MCF 10A (cell line): ENCODE measurements at regions of chr6 and their contacts with region 1.

Region 1: DNA sequence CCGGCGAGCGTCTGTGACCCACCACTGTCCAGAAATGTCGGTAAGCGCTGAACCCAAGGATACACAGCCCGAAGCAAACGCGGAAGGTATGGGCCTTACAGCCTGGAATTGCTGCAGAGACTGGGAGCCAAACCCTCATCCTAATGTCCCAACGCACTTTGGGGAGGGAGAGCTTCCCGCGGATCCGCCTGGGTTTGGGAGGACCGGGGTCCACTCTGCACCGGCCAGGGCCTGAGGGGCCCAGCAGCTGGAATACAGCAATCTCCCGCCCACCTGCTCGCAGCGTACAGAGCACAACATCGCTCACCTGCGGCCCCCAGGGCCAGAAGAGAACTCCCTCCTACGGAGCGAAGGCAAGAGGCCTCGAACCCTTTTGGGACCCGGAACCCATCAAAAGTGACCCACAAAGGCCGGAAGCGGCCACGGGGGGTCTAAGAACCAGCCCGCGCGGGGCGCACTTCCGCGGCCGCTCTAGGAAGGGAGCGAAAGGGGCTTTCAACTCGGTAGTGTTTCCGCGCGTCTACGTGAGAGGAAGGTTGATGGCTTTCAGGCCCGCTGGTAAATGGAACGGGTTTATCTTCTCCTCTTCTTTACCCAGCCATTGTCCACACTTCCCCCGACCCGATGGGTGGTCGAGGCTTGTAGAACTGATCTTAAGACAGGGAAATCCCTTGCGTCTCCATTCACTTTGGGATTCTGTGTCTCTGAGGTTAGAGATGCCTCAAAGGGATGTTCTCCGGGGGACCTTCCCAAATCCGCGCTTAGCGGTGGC is at the start of gene ZSCAN12:
- DNase-seq: peak; percentile 78
- H3K4me3 Mint-ChIP-seq: peak within 1 kb of the TSS; percentile 81
- H3K27ac Mint-ChIP-seq: peak within 1 kb of the TSS; percentile 85
- H3K4me1 Mint-ChIP-seq: peaks cover 36% of the 10 kb centered on the region
- H3K27me3 Mint-ChIP-seq: no peaks in the 10 kb centered on the region
- CTCF ChIP-seq: no peak
- total RNA-seq, gene ZSCAN12: 4.4 and 5.3 TPM in 2 replicates

Region 2: GRCh38 chr6:28443112-28443773 is 43.7 kb after region 1 on chr6 and contains the start of gene ZSCAN23:
- CTCF ChIA-PET with region 1: no interaction called
- POLR2A ChIA-PET with region 1: interaction called, 3 read pairs
- intact Hi-C with region 1: loop called (anchors 2 kb)
- DNase-seq: peak; percentile 85
- H3K4me3 Mint-ChIP-seq: peak within 1 kb of the TSS; percentile 99
- H3K27ac Mint-ChIP-seq: peak within 1 kb of the TSS; percentile 93
- H3K4me1 Mint-ChIP-seq: peaks cover 11% of the 10 kb centered on the region
- H3K27me3 Mint-ChIP-seq: peaks cover 11% of the 10 kb centered on the region
- CTCF ChIP-seq: no peak
- total RNA-seq, gene ZSCAN23: 3.0 and 4.7 TPM in 2 replicates

Region 3: GRCh38 chr6:28615955-28616747 is 216.6 kb after region 1 on chr6:
- CTCF ChIA-PET with region 1: no interaction called
- POLR2A ChIA-PET with region 1: no interaction called
- intact Hi-C with region 1: no loop called
- DNase-seq: no peak
- H3K4me3 Mint-ChIP-seq: no peak overlapping the region
- H3K27ac Mint-ChIP-seq: no peak overlapping the region
- H3K4me1 Mint-ChIP-seq: no peaks in the 10 kb centered on the region
- H3K27me3 Mint-ChIP-seq: no peaks in the 10 kb centered on the region
- CTCF ChIP-seq: no peak